BJ (cell line): ENCODE measurements at regions of chr5 and their contacts with region 1.

Region 1: DNA sequence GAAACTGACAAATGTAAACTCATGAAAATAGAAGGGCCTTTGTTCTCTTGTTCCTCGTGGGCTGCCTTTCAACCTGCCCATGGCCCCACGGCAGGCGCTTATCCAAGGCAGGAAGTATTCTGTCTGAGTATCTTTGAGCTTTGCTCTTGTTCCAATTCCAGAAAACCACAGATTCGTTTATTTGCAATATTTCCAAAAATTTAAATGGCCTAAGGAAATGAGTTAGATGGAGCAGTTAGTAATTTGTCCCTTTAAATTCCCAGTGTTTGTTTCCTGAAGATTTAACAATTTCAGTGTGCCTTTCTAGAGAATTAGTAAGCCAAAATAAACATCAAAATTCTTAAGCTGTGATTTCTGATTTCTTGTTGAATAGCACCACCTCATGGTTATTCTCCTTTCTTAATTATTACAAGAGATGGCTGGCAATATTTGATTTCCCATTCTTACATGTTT is 299.4 kb upstream of the RASA1 start:
- DNase-seq: peak; percentile 49
- H3K4me3 ChIP-seq: no peak overlapping the region
- H3K27me3 ChIP-seq: no peaks in the 10 kb centered on the region
- CTCF ChIP-seq: peak; percentile 26; the same call in 1 of the 2 replicates

Region 2: DNA sequence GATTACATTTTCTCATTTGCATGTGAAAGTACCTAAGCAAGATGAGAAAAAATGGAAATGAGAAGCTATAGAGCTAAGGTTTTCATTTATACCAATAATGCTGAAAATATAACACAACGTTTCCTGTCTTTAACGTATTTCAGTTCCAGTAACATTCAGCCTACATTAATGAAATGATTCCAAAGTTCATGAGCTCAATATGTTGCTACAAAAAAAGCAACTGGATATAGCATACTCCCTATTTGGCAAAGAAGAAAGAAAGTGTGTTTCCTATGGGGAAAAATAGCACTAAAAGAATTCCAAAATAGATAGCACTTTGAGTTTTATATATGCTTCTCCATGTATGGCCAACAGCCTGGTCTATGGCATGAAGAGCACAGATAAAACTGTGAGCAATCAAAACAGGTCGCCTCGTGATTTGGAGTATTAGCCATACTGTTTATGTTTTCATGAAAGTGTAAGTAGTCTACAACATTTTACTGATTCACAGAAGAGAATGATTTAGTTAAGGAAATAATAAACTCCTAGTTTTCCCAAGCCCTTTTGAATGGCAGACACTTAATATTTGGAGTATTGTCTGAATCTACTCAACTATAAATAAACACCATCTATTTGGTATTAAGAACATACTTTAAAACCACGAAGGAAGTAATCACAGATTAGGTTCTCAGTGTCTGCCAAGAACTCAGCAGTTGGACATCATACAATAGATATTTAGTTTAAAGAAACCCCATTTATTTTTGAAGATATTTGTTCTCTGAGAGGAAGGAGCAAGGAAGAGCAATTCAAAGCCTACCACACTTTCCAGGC is 40.6 kb after region 1 on chr5:
- CTCF ChIA-PET with region 1: interaction called, 36 read pairs
- POLR2A ChIA-PET with region 1: no interaction called
- DNase-seq: no peak
- H3K4me3 ChIP-seq: no peak overlapping the region
- H3K27me3 ChIP-seq: no peaks in the 10 kb centered on the region
- CTCF ChIP-seq: no peak